ENCODE measurements at regions of chr12 and their contacts with region 1.

Region 1: DNA sequence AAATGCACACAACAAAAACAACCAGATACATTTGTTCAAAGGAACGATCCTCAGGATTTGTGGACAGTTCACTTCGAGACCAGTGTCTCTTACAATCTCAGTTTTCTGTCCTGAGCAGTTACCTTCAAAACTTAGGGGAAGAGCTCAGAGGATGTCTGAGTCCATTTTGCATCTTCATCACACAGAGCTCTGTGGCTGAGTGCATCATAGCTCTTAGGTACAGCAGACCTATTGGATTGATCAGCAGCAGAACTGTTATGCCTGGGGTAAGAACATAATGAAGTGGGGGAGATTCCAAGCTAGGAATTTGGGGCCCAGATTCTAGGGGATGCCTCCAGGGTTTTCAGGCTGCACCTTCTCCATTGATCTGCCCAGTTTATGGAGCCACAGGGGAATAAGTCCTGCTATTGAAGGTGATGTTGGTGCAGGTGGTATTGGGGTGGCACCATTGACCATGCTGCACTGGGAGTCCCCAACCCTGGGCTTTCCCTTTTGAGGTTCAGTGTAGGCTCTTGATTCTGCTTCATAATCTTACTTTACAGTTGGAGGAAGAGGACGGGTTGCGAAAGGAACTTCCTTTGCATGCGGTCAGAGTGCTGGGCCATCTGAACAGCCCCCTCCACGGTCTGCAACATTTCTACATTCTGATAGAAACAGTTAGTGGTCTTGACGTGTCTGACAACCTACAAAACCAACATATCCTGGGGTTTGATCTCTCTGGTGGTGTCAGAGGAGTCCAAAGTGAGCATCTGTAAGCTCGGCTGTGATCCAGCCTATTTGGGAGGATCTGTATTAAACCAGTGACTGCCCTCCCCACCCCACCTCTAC is 112.8 kb downstream of the CHST11 start:
- DNase-seq: peak; percentile 90
- ATAC-seq: peak; percentile 75
- H3K4me3 ChIP-seq: peak overlapping the region in 3 of 5 experiments; percentile 18 to 50 (median 21)
- H3K4me3 Mint-ChIP-seq: peak overlapping the region; percentile 79
- H3K27ac ChIP-seq: peak overlapping the region; percentile 70 to 87
- H3K27ac Mint-ChIP-seq: peak overlapping the region; percentile 82
- H3K4me1 ChIP-seq: peaks cover 37 to 55% of the 10 kb centered on the region in 2 donors
- H3K4me1 Mint-ChIP-seq: peaks cover 75% of the 10 kb centered on the region
- H3K27me3 ChIP-seq: no peaks in the 10 kb centered on the region
- H3K27me3 Mint-ChIP-seq: no peaks in the 10 kb centered on the region
- CTCF ChIP-seq: no peak

Region 2: GRCh38 chr12:104553421-104553820 is 16.1 kb before region 1 on chr12:
- CTCF ChIA-PET with region 1: interaction called, 3 read pairs
- POLR2A ChIA-PET with region 1: no interaction called
- intact Hi-C with region 1: loop called (anchors 2 kb)
- DNase-seq: no peak
- ATAC-seq: no peak
- H3K4me3 ChIP-seq: no peak overlapping the region
- H3K4me3 Mint-ChIP-seq: no peak overlapping the region
- H3K27ac ChIP-seq: no peak overlapping the region
- H3K27ac Mint-ChIP-seq: no peak overlapping the region
- H3K4me1 ChIP-seq: peaks cover 25 to 54% of the 10 kb centered on the region in 2 donors
- H3K4me1 Mint-ChIP-seq: peaks cover 73% of the 10 kb centered on the region
- H3K27me3 ChIP-seq: no peaks in the 10 kb centered on the region
- H3K27me3 Mint-ChIP-seq: no peaks in the 10 kb centered on the region
- CTCF ChIP-seq: no peak

Region 3: DNA sequence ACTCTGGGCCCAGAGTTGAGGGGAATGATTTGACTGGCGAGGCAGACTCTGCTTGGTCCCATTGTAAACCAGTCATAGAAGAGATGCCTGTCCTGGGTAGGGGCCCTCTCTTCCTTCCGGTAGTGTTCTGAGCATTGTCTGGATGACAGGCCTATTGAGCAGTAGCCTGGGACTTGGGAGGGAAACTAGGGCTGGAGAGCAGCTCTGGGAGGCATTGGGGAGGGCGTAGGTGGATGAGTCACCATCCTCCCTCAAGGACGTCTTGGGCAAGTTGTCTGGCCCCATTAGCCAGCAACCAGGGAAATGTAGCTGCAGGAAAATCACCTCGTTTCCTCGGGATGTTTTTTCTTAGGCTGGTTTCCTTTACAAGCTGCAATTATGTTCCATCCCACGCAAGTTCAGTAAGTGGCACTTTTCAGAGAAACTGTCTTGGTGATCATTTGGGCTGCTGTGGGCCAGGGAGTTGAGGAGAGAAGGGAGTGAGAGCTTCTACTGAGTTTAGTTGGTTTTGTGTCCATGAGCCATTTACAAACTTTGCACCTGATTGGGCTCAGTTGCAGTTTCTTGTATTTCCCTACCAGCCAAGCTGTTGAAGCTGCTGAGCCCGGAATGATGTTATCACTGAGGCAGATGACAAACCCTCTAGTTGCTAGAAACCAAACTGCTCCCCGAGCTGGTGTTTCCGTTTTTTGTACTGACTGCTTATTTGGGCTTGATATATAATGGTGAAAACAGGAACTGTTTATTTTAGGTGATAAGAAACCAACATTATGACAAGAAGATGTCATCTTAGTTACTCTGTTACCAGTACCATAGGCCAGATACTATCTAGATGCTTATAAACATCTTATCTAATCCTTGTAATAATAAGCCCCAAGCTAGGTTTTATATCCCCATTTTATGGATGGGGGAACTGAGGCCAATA is 34.8 kb after region 1 on chr12:
- CTCF ChIA-PET with region 1: interaction called, 3 read pairs
- POLR2A ChIA-PET with region 1: no interaction called
- intact Hi-C with region 1: loop called (anchors 5 kb)
- DNase-seq: peak; percentile 82
- ATAC-seq: peak; percentile 89
- H3K4me3 ChIP-seq: peak overlapping the region in 1 of 5 experiments; percentile 21
- H3K4me3 Mint-ChIP-seq: peak overlapping the region; percentile 58
- H3K27ac ChIP-seq: peak overlapping the region; percentile 60 to 73
- H3K27ac Mint-ChIP-seq: peak overlapping the region; percentile 69
- H3K4me1 ChIP-seq: peaks cover 37 to 44% of the 10 kb centered on the region in 2 donors
- H3K4me1 Mint-ChIP-seq: peaks cover 64% of the 10 kb centered on the region
- H3K27me3 ChIP-seq: no peaks in the 10 kb centered on the region
- H3K27me3 Mint-ChIP-seq: no peaks in the 10 kb centered on the region
- CTCF ChIP-seq: no peak

Region 4: GRCh38 chr12:104615048-104615561 is 45.5 kb after region 1 on chr12:
- CTCF ChIA-PET with region 1: no interaction called
- POLR2A ChIA-PET with region 1: no interaction called
- intact Hi-C with region 1: no loop called
- DNase-seq: no peak
- ATAC-seq: no peak
- H3K4me3 ChIP-seq: no peak overlapping the region
- H3K4me3 Mint-ChIP-seq: no peak overlapping the region
- H3K27ac ChIP-seq: no peak overlapping the region
- H3K27ac Mint-ChIP-seq: peak overlapping the region; percentile 10
- H3K4me1 ChIP-seq: peaks cover 0 to 2% of the 10 kb centered on the region in 2 donors
- H3K4me1 Mint-ChIP-seq: peaks cover 44% of the 10 kb centered on the region
- H3K27me3 ChIP-seq: no peaks in the 10 kb centered on the region
- H3K27me3 Mint-ChIP-seq: no peaks in the 10 kb centered on the region
- CTCF ChIP-seq: no peak